Activated CD8-positive, alpha-beta T cell treated with anti-CD3 and anti-CD28 coated beads for 36 hours (primary cell): ENCODE measurements at regions of chr5 and their contacts with region 1.

Region 1: GRCh38 chr5:148730943-148731861 is 76.9 kb upstream of the HTR4 start:
- DNase-seq: peak; percentile 89
- ATAC-seq: peak; percentile 95
- H3K4me3 Mint-ChIP-seq: peak overlapping the region; percentile 20
- H3K27ac Mint-ChIP-seq: peak overlapping the region; percentile 30
- H3K4me1 Mint-ChIP-seq: peaks cover 2% of the 10 kb centered on the region
- H3K27me3 Mint-ChIP-seq: peaks cover 5% of the 10 kb centered on the region
- CTCF ChIP-seq: peak; percentile 98

Region 2: DNA sequence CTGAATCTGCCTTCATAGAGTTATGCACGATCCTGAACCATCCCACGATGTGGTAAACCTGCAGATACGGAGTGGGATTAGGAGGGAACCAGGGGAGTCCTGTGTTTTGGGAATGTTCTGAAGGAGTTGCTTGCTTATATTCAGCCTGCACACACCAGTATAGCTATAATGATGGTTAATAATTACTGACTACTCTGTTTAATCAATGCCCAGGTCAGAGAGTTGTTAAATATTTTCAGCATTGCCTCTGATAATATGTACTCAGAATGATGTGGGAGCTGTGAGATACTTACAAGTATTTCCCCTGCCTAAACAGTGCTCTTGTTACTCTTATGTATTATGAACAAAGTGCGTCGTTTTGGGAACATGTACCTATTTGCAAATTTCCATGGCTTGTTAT is 1531.2 kb before region 1 on chr5:
- CTCF ChIA-PET with region 1: no interaction called
- POLR2A ChIA-PET with region 1: no interaction called
- intact Hi-C with region 1: no loop called
- DNase-seq: no peak
- ATAC-seq: no peak
- H3K4me3 Mint-ChIP-seq: no peak overlapping the region
- H3K27ac Mint-ChIP-seq: no peak overlapping the region
- H3K4me1 Mint-ChIP-seq: no peaks in the 10 kb centered on the region
- H3K27me3 Mint-ChIP-seq: peaks cover 4% of the 10 kb centered on the region
- CTCF ChIP-seq: no peak

Region 3: DNA sequence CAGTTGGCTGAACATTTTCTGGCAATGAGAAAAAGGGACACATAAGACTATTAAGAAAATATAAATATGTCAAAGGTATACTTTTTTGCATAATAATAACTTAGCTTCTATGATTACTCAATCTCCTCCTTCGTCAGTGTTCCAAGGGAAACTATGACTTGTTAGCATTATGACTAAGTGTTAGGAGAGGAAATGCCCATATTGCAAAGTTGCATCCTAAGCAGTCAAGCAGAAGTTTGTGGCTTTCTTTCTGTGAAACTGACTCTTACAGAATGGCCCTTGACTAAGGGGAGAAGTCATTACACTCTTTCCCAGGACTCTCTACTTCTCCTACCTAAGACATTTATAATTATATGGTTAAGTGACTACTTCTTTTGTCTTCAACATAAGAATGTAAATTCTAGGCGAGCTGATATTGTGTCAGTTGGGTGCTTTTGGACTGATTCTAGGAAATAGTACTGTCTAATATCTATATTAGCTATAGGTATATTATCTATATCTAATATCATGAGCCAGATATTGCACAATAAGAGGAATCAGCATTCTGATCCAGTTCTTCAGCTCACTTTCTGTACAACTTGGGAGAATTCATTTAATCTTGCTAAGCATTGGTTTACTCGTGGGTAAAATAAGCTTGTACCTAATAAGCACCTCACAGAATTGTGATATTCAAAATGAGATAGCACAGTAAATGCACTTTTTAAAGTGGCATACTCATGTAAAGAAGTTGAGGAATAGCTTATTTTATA is 544.8 kb before region 1 on chr5:
- CTCF ChIA-PET with region 1: interaction called, 15 read pairs
- POLR2A ChIA-PET with region 1: no interaction called
- intact Hi-C with region 1: no loop called
- DNase-seq: peak; percentile 2
- ATAC-seq: peak; percentile 97
- H3K4me3 Mint-ChIP-seq: no peak overlapping the region
- H3K27ac Mint-ChIP-seq: no peak overlapping the region
- H3K4me1 Mint-ChIP-seq: peaks cover 9% of the 10 kb centered on the region
- H3K27me3 Mint-ChIP-seq: peaks cover 21% of the 10 kb centered on the region
- CTCF ChIP-seq: no peak

Region 4: GRCh38 chr5:148457183-148457620 is 274.0 kb before region 1 on chr5:
- CTCF ChIA-PET with region 1: interaction called, 26 read pairs
- POLR2A ChIA-PET with region 1: no interaction called
- intact Hi-C with region 1: loop called (anchors 5 kb)
- DNase-seq: peak; percentile 46
- ATAC-seq: peak; percentile 62
- H3K4me3 Mint-ChIP-seq: no peak overlapping the region
- H3K27ac Mint-ChIP-seq: no peak overlapping the region
- H3K4me1 Mint-ChIP-seq: peaks cover 15% of the 10 kb centered on the region
- H3K27me3 Mint-ChIP-seq: peaks cover 19% of the 10 kb centered on the region
- CTCF ChIP-seq: peak; percentile 30

Region 5: DNA sequence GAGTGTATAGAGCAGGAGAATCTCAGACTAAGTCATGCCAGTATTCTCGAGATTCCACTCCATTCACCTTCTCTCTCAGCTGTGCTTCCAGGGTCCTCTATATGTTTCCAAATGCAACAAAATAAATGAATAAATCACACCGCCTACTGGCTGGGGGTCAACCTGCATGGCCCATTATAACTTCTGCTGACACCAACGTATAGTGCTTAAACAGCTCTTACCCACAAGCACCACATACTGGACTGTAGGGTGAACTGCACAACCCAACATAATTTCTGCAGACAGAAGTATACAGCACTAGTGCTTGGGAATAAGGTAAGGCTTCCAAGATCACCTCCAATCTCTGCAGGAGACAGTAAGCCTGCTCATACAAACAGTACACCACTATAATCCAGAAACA is 43.8 kb before region 1 on chr5:
- CTCF ChIA-PET with region 1: interaction called, 10 read pairs
- POLR2A ChIA-PET with region 1: no interaction called
- intact Hi-C with region 1: no loop called
- DNase-seq: peak; percentile 30
- ATAC-seq: peak; percentile 82
- H3K4me3 Mint-ChIP-seq: no peak overlapping the region
- H3K27ac Mint-ChIP-seq: no peak overlapping the region
- H3K4me1 Mint-ChIP-seq: peaks cover 6% of the 10 kb centered on the region
- H3K27me3 Mint-ChIP-seq: peaks cover 23% of the 10 kb centered on the region
- CTCF ChIP-seq: no peak

Region 6: DNA sequence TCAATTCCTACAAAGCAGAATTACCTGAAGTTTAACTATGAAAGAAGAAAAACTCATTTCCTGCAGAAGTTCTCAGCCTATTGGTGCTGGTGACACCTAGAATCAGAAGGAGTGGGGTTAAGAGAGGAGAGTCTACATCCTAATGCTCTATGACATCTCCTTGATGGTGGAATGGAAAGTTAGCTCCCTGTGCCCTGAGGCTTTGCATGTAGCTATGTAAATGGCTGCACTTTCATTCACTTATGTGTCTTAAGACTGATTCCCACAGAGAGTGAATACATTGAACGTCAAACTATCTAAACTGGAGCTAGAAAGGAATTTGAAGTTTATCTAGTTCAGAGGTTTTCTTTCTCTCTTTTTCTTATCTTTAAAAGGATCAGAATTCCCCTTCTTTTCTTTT is 43.1 kb after region 1 on chr5:
- CTCF ChIA-PET with region 1: interaction called, 12 read pairs
- POLR2A ChIA-PET with region 1: no interaction called
- intact Hi-C with region 1: no loop called
- DNase-seq: no peak
- ATAC-seq: no peak
- H3K4me3 Mint-ChIP-seq: no peak overlapping the region
- H3K27ac Mint-ChIP-seq: no peak overlapping the region
- H3K4me1 Mint-ChIP-seq: peaks cover 4% of the 10 kb centered on the region
- H3K27me3 Mint-ChIP-seq: peaks cover 15% of the 10 kb centered on the region
- CTCF ChIP-seq: no peak

Region 7: DNA sequence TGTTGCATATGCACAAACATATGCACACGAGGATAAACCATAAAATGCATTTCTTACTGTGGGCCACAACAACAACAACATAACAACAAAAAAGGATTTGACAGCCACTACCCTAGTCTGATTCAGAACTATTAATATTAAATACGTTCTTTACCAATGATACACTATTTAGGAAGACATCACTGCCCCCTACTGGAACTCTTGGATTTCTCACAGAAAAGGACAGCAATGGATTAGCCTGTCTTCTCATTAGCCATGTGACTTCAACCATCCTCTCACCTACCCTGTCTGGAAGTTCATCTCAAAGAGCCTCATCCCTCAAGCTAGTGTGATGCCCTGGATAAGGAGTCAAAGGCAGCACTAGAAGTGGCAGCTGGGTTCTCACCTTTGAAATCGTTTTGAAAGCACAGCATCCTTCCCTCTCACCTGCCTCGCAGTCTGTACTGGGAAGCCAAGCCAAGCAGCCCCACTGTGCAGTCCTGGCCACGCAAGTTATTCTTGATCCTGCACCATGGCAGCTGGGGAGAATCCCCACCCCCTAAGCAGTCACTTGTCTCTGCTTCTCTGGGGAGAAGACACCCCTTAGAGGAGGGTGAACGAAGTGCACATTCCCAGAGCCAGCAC is 267.1 kb after region 1 on chr5:
- CTCF ChIA-PET with region 1: interaction called, 296 read pairs
- POLR2A ChIA-PET with region 1: no interaction called
- intact Hi-C with region 1: loop called (anchors 2 kb)
- DNase-seq: peak; percentile 25
- ATAC-seq: peak; percentile 67
- H3K4me3 Mint-ChIP-seq: no peak overlapping the region
- H3K27ac Mint-ChIP-seq: no peak overlapping the region
- H3K4me1 Mint-ChIP-seq: no peaks in the 10 kb centered on the region
- H3K27me3 Mint-ChIP-seq: peaks cover 30% of the 10 kb centered on the region
- CTCF ChIP-seq: peak; percentile 71